Caco-2 (cell line): ENCODE measurements at regions of chr13 and their contacts with region 1.

Region 1: DNA sequence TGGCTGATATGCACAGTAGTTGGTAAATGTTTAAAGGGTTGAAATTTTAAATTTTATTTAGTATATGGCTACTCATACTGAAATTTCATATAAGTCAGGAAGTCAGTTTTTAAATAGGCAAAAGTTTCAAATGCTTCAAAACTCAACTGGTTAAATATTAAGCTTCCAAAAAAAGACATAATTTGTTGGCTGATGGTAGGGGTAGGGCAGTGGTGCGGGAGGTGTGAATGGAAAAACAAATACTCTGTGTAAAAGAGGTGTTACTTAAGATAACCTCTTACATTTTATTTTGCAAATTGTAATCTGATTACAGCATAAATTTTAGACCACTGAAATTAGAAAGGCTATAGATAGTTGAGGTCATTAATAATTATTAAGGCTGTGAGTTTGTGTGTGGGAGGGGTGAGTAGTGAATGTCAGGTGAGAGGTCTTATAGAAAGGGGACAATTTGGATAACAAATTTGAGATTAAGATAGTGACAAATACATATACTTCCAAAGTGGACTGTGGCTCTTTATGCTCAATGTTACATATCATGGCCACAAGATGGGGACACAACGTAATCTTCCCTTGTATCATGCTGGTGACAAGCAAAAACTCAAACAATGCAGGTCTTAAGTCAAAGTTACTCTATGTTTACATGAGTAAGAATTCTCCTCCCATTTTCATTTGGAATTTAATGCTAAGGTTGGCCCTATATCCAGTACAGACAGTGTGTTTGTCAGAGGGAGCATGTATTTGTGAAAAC is 36.6 kb upstream of the OXGR1 start:
- DNase-seq: peak in 1 of 2 experiments; percentile 32
- H3K4me3 ChIP-seq: no peak overlapping the region
- H3K4me3 Mint-ChIP-seq: no peak overlapping the region
- H3K27ac Mint-ChIP-seq: no peak overlapping the region
- H3K4me1 ChIP-seq: peaks cover 13% of the 10 kb centered on the region
- H3K4me1 Mint-ChIP-seq: peaks cover 26% of the 10 kb centered on the region
- H3K27me3 ChIP-seq: no peaks in the 10 kb centered on the region
- H3K27me3 Mint-ChIP-seq: no peaks in the 10 kb centered on the region
- CTCF ChIP-seq: peak; percentile 31 to 56

Region 2: DNA sequence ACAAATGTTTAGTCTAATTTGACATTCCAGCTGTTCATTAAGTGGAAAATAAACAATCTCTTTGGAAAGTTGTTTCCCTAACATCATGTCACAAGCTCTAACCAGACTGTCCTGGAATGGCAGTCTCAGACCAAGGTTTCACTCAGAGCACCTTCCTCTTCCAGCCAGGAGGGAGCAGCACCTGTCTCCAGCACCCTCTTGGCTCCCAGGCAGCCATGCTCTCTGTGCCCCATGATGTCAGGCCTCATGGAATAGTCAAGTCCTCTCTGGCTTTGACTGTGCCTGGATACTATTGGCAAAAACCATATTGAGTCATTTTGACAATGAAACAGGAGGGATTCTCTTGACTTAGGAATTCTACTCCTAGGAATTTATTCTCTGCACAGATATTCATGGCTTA is 208.0 kb before region 1 on chr13:
- CTCF ChIA-PET with region 1: no interaction called
- POLR2A ChIA-PET with region 1: no interaction called
- intact Hi-C with region 1: loop called (anchors 1 kb)
- DNase-seq: peak; percentile 53 to 64
- H3K4me3 ChIP-seq: no peak overlapping the region
- H3K4me3 Mint-ChIP-seq: no peak overlapping the region
- H3K27ac Mint-ChIP-seq: no peak overlapping the region
- H3K4me1 ChIP-seq: no peaks in the 10 kb centered on the region
- H3K4me1 Mint-ChIP-seq: no peaks in the 10 kb centered on the region
- H3K27me3 ChIP-seq: no peaks in the 10 kb centered on the region
- H3K27me3 Mint-ChIP-seq: no peaks in the 10 kb centered on the region
- CTCF ChIP-seq: peak; percentile 62 to 77

Region 3: DNA sequence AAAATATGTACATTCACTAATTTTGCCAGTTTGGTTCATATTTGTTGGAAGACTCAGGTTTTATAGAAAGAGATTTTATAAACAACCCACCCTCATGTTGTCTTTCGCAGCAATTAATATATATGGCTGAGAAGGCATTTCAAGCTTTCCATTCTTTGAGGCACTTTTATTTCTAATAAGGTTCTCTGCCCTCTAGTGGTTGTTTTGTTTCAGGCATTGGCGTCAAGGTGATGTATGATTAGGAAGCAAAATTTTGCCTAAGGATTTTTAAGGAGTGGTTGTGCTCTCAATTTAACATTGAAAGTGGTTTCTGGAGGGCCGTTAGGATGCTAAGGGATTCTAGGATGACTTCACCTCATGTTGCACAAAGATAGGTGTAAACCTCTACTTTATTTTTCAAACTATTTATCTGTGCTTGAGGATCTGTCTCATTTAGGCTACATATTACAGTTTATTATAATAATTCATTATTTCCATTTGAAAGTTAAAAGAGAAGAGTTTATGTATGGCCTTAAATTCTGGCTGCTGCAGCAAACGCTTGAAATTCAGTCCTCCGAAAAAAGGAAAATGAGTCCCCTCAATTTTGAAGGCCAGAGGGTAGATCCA is 72.5 kb before region 1 on chr13:
- CTCF ChIA-PET with region 1: no interaction called
- POLR2A ChIA-PET with region 1: no interaction called
- intact Hi-C with region 1: loop called (anchors 1 kb)
- DNase-seq: peak in 1 of 2 experiments; percentile 44
- H3K4me3 ChIP-seq: no peak overlapping the region
- H3K4me3 Mint-ChIP-seq: no peak overlapping the region
- H3K27ac Mint-ChIP-seq: no peak overlapping the region
- H3K4me1 ChIP-seq: no peaks in the 10 kb centered on the region
- H3K4me1 Mint-ChIP-seq: no peaks in the 10 kb centered on the region
- H3K27me3 ChIP-seq: no peaks in the 10 kb centered on the region
- H3K27me3 Mint-ChIP-seq: peaks cover 6% of the 10 kb centered on the region
- CTCF ChIP-seq: peak; percentile 57 to 87

Region 4: GRCh38 chr13:97011446-97012131 is 19.3 kb before region 1 on chr13:
- CTCF ChIA-PET with region 1: no interaction called
- POLR2A ChIA-PET with region 1: no interaction called
- intact Hi-C with region 1: loop called (anchors 2 kb)
- DNase-seq: no peak
- H3K4me3 ChIP-seq: no peak overlapping the region
- H3K4me3 Mint-ChIP-seq: no peak overlapping the region
- H3K27ac Mint-ChIP-seq: no peak overlapping the region
- H3K4me1 ChIP-seq: no peaks in the 10 kb centered on the region
- H3K4me1 Mint-ChIP-seq: no peaks in the 10 kb centered on the region
- H3K27me3 ChIP-seq: no peaks in the 10 kb centered on the region
- H3K27me3 Mint-ChIP-seq: peaks cover 12% of the 10 kb centered on the region
- CTCF ChIP-seq: no peak

Region 5: DNA sequence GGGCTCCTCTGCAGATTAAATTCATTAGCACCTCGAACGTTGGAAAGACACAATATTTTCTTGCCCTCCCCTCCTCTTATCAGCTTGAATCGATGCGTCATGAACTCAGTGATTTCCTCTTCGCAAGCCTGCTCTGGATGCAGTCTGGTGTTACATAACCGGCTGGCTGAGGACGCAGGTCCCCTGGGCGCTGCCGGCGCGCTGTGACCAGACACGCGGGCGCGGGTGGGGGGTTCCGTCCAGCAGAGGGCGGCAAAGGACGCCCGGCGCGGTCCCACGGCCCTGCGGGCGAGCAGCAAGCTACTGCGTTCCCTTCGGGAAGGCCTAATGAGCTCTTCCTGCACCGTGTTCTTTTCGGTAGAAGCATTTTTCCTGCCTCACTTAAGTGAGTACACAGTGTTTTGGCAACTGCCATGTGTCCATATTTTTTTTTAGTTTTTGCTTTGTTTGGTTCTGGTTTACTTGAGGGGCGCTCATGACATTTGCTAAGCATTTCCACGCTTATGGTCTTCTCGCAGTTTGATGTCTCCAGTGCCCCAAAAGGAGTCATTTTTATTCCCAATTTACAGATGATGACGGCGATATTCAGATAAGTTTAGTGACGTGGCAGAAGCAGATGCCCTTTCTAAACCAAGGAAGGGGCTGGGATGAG is 79.1 kb after region 1 on chr13:
- CTCF ChIA-PET with region 1: no interaction called
- POLR2A ChIA-PET with region 1: no interaction called
- intact Hi-C with region 1: loop called (anchors 2 kb)
- DNase-seq: peak; percentile 88 to 96
- H3K4me3 ChIP-seq: no peak overlapping the region
- H3K4me3 Mint-ChIP-seq: peak overlapping the region; percentile 52
- H3K27ac Mint-ChIP-seq: peak overlapping the region; percentile 36
- H3K4me1 ChIP-seq: peaks cover 30% of the 10 kb centered on the region
- H3K4me1 Mint-ChIP-seq: peaks cover 36% of the 10 kb centered on the region
- H3K27me3 ChIP-seq: no peaks in the 10 kb centered on the region
- H3K27me3 Mint-ChIP-seq: no peaks in the 10 kb centered on the region
- CTCF ChIP-seq: peak; percentile 91 to 93

Region 6: DNA sequence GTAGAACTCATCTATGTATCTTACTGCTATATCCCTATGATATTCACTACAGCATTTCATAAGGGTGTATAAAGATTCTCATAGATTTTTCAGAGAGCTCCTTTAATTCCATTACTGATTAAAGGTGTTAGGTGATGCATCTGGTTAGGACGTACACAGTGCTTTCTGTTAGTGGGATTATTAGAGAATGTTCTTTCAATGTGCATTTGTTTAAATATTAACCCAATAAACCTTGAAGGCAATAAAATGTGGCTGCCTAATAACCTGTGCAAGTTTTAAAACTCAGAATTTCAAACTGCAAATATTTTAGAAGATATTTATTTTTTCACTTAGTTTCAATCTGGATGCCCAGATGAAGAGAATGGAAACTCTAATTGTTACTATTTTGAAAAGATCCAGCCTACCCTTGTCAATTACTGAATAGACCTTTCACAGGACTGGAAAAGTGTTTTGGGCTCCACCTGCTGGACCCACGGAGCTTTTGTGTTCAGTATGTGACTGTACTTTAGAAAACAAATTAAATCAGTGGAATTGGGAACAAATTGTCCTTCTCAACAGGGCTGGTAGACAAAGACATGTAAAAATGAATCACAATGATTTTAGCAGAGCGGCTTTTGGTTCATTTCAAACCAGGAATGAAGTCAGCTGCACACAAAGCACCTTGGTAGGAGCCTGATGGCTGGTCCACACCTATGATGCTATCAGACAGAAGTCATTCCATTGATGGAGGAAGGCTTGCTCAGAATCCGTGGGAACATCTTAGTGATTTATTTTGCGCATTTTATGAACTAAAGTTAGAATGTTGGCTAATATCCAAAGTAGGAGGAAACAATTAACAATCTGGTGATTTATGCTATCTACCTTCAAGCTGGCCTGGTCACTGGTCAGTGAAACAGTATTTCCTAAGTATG is 313.6 kb after region 1 on chr13:
- CTCF ChIA-PET with region 1: no interaction called
- POLR2A ChIA-PET with region 1: no interaction called
- intact Hi-C with region 1: loop called (anchors 1 kb)
- DNase-seq: peak; percentile 65 to 69
- H3K4me3 ChIP-seq: no peak overlapping the region
- H3K4me3 Mint-ChIP-seq: no peak overlapping the region
- H3K27ac Mint-ChIP-seq: no peak overlapping the region
- H3K4me1 ChIP-seq: peaks cover 11% of the 10 kb centered on the region; the same call in 1 of the 2 replicates
- H3K4me1 Mint-ChIP-seq: peaks cover 8% of the 10 kb centered on the region
- H3K27me3 ChIP-seq: no peaks in the 10 kb centered on the region
- H3K27me3 Mint-ChIP-seq: no peaks in the 10 kb centered on the region
- CTCF ChIP-seq: peak; percentile 71 to 84

Region 7: GRCh38 chr13:97432917-97433726 is 402.2 kb after region 1 on chr13:
- CTCF ChIA-PET with region 1: no interaction called
- POLR2A ChIA-PET with region 1: no interaction called
- intact Hi-C with region 1: loop called (anchors 5 kb)
- DNase-seq: peak; percentile 100
- H3K4me3 ChIP-seq: peak overlapping the region; percentile 59
- H3K4me3 Mint-ChIP-seq: peak overlapping the region; percentile 94
- H3K27ac Mint-ChIP-seq: peak overlapping the region; percentile 98
- H3K4me1 ChIP-seq: peaks cover 7% of the 10 kb centered on the region; the same call in 1 of the 2 replicates
- H3K4me1 Mint-ChIP-seq: no peaks in the 10 kb centered on the region
- H3K27me3 ChIP-seq: no peaks in the 10 kb centered on the region
- H3K27me3 Mint-ChIP-seq: peaks cover 6% of the 10 kb centered on the region
- CTCF ChIP-seq: no peak